ENCODE measurements at regions of chr1 and their contacts with region 1.

Region 1: GRCh38 chr1:205495237-205495823 is 9.1 kb upstream of the CDK18 start:
- DNase-seq: no peak
- ATAC-seq: no peak

Region 2: GRCh38 chr1:203726417-203726867 is 1768.9 kb before region 1 on chr1:
- intact Hi-C with region 1: no loop called
- DNase-seq: no peak
- ATAC-seq: no peak

Region 3: DNA sequence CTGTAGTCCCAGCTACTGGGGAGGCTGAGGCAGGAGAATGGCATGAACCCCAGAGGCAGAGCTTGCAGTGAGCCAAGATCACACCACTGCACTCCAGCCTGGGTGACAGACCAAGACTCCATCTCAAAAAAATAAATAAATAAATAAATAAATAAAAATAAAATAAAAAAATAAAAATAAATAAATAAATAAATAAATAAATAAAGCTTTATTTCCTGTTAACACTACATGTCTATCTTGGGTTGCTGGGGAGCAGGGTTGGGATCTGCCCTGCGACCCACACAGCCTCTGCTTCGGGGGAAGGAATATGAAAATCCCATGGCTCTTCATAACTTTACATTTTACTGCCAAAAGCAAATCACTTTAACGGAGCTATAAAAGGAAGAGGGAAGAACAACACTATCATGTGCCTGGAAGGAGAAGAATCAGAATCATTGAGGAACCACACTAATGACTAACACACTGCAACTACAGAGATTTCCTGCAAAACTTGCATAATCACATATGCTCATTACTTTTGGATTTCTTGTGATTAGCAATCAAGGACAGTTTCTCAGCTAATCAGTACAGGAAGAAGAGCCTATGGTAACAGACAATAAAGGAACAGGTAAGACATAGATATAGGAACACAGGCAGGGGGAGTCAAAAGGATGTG is 1753.3 kb after region 1 on chr1:
- intact Hi-C with region 1: loop called (anchors 5 kb)
- DNase-seq: no peak
- ATAC-seq: peak; percentile 38

Measured in sciatic nerve (tissue), 2 donors.